GM13976 (cell line): ENCODE measurements at regions of chr5 and their contacts with region 1.

Region 1: DNA sequence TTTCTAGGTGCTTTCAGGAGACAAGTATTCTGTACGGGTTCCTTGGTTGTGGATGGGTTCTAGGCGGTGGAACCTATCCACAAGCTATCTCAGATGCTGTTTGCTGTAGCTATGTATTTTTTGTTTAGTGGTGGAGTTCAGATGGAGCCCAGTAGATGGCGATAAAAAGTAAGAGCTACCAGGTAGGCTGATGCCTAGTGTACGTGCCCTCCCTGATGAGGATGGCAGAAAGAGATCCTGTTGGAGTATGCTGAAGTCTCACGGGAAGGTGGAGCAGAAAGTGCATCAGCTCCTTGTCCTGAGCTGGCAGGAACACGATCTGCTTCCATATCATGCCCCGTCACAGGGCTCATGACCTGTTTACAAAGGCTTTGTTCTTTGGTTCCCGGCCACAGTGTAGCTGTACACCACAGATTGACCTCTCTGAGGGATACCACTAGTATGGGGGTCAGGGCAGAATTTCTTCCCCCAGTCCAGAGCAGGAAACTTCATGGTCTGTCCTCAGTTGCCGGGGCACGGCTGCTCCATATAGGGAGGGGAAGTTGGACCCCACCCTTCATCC is 12.6 kb upstream of the UGT3A2 start:
- DNase-seq: peak; percentile 72
- CTCF ChIP-seq: peak; percentile 66

Region 2: GRCh38 chr5:35938568-35939227 is 140.6 kb before region 1 on chr5 and contains the start of gene CAPSL:
- in situ Hi-C with region 1: no loop called
- DNase-seq: no peak
- CTCF ChIP-seq: no peak

Region 3: DNA sequence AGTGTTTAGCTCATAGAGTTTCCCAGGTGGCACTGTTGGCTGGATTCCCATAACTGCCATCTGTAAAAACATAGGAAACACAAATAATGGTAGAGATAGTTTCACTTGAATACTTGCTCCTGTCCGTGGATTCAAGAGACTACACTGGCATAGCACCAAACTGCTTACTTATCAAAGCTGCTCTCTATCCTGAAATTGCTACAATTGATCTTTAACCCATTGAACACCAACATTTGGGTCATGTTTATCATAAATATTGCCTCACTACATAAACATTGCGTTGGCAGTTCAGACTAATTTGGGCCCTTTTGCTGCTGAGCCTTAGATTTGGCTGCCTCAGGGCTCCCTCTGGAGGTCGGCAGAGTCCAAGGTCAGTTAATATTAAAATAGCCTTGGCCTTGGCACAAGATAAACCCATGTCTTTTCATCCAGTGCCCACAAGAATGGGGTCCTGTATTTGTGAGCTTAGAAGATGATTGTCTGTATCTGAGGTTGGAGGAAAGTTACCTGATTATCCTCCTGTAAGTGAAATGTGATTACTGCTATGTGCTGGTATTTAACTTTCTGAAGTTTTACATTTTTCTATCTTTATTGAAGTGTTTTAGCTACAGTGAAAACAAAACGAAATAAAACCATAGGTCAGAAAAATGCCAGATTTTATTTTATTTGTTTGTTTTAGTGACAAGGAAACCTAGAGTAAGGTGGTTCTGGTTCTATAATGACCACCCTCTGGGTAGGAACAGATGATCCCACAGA is 226.5 kb after region 1 on chr5:
- in situ Hi-C with region 1: loop called (anchors 10 kb)
- DNase-seq: peak; percentile 34
- CTCF ChIP-seq: peak; percentile 73

Region 4: GRCh38 chr5:36507332-36507952 is 428.2 kb after region 1 on chr5:
- in situ Hi-C with region 1: loop called (anchors 25 kb)
- DNase-seq: peak; percentile 60
- CTCF ChIP-seq: peak; percentile 62